PC-3 (cell line): ENCODE measurements at regions of chr3 and their contacts with region 1.

Region 1: DNA sequence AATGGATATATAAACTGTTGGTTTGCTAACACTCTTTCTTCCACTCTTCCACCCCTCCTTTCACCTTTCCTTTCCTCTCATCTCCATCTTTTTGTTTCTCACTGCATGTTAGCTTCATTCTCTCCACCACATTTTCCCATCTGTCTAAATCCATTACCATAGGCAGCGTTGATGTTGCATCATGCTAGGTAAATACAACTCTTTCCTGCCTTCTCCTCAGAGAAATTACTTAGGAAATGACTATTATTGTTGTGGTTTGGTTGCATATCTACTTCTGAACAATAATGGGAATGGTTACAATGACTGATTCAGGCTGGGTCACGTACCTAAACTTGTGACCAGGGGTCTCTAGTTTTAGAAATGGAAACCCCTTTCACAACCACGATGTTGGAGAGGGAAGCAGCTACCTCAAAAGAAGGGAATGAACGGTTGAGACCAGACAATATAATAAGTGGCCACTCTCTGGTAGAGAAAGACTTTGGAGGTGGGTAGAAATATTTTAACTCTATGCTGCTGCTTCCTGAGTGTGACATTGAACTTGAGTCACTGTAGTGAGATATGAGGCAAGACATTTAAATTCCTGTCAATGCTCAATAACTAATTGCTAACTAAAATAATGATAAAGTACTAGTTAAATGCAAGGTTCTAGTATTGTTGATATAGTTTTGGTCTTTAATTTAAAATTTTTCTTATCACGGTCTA is 314.1 kb upstream of the TGFBR2 start:
- DNase-seq: peak; percentile 86
- ATAC-seq: peak; percentile 88
- H3K4me3 ChIP-seq: 0 out of 2 replicates have a peak overlapping the region, but pooled peaks have one; percentile 9
- H3K27ac ChIP-seq: peak overlapping the region; percentile 86
- H3K4me1 ChIP-seq: peaks cover 34% of the 10 kb centered on the region
- H3K27me3 ChIP-seq: no peaks in the 10 kb centered on the region
- CTCF ChIP-seq: no peak

Region 2: DNA sequence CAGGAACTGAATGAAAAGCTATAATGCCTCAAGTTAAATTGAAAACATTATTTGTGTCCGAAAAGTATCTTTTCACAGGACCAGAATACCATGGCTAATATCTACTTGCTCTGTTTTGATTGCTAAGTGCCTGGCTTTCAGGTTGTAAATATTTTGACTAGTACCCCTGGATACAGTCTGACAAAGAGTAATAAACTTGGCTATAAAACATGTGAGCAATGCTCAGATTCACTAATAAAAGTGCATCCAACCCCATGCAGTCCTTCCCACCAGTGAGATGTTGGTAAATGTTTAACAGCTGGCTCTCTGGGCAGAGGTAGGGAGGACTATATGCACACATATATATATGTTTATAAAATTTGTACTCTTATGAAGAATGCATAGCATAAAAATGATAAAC is 32.2 kb after region 1 on chr3:
- CTCF ChIA-PET with region 1: no interaction called
- POLR2A ChIA-PET with region 1: no interaction called
- intact Hi-C with region 1: loop called (anchors 2 kb)
- DNase-seq: peak; percentile 90
- ATAC-seq: peak; percentile 98
- H3K4me3 ChIP-seq: 0 out of 2 replicates have a peak overlapping the region, but pooled peaks have one; percentile 5
- H3K27ac ChIP-seq: peak overlapping the region; percentile 91
- H3K4me1 ChIP-seq: peaks cover 17% of the 10 kb centered on the region
- H3K27me3 ChIP-seq: no peaks in the 10 kb centered on the region
- CTCF ChIP-seq: no peak

Region 3: GRCh38 chr3:30586096-30586805 is 293.9 kb after region 1 on chr3:
- CTCF ChIA-PET with region 1: no interaction called
- POLR2A ChIA-PET with region 1: no interaction called
- intact Hi-C with region 1: no loop called
- DNase-seq: peak; percentile 58
- ATAC-seq: peak; percentile 54
- H3K4me3 ChIP-seq: no peak overlapping the region
- H3K27ac ChIP-seq: no peak overlapping the region
- H3K4me1 ChIP-seq: peaks cover 12% of the 10 kb centered on the region
- H3K27me3 ChIP-seq: no peaks in the 10 kb centered on the region
- CTCF ChIP-seq: no peak

Region 4: GRCh38 chr3:30597131-30597768 is 304.9 kb after region 1 on chr3:
- CTCF ChIA-PET with region 1: no interaction called
- POLR2A ChIA-PET with region 1: no interaction called
- intact Hi-C with region 1: no loop called
- DNase-seq: peak; percentile 98
- ATAC-seq: peak; percentile 85
- H3K4me3 ChIP-seq: peak overlapping the region; percentile 18; the same call in 1 of the 2 replicates
- H3K27ac ChIP-seq: peak overlapping the region; percentile 88
- H3K4me1 ChIP-seq: peaks cover 35% of the 10 kb centered on the region
- H3K27me3 ChIP-seq: no peaks in the 10 kb centered on the region
- CTCF ChIP-seq: no peak